ENCODE measurements at regions of chr17 and their contacts with region 1.

Region 1: GRCh38 chr17:40113110-40113906 is 8.5 kb upstream of the MSL1 start:
- DNase-seq: peak; percentile 84 to 97 (median 90)
- ATAC-seq: peak; percentile 85
- H3K4me3 ChIP-seq: peak overlapping the region; percentile 17
- H3K27ac ChIP-seq: peak overlapping the region; percentile 90
- H3K4me1 ChIP-seq: peaks cover 47 to 70% of the 10 kb centered on the region in 2 experiments
- H3K27me3 ChIP-seq: no peaks in the 10 kb centered on the region
- CTCF ChIP-seq: peak; percentile 86 to 94 (median 93)
- EP300 ChIP-seq: peak; percentile 41; the same call in 1 of the 2 replicates
- POLR2A ChIP-seq: peak; percentile 73
- RAD21 ChIP-seq: peak; percentile 82 to 89

Region 2: DNA sequence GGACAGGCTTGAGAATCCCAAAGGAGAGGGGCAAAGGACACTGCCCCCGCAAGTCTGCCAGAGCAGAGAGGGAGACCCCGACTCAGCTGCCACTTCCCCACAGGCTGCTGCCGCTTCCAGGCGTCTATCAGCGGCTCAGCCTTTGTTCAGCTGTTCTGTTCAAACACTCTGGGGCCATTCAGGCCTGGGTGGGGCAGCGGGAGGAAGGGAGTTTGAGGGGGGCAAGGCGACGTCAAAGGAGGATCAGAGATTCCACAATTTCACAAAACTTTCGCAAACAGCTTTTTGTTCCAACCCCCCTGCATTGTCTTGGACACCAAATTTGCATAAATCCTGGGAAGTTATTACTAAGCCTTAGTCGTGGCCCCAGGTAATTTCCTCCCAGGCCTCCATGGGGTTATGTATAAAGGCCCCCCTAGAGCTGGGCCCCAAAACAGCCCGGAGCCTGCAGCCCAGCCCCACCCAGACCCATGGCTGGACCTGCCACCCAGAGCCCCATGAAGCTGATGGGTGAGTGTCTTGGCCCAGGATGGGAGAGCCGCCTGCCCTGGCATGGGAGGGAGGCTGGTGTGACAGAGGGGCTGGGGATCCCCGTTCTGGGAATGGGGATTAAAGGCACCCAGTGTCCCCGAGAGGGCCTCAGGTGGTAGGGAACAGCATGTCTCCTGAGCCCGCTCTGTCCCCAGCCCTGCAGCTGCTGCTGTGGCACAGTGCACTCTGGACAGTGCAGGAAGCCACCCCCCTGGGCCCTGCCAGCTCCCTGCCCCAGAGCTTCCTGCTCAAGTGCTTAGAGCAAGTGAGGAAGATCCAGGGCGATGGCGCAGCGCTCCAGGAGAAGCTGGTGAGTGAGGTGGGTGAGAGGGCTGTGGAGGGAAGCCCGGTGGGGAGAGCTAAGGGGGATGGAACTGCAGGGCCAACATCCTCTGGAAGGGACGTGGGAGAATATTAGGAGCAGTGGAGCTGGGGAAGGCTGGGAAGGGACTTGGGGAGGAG is 98.0 kb before region 1 on chr17 and contains the start of gene CSF3:
- CTCF ChIA-PET with region 1: interaction called, 15 read pairs
- POLR2A ChIA-PET with region 1: interaction called, 4 read pairs
- in situ Hi-C with region 1: no loop called
- intact Hi-C with region 1: loop called (anchors 1 kb)
- DNase-seq: no peak
- ATAC-seq: no peak
- H3K4me3 ChIP-seq: no peak within 1 kb of the TSS
- H3K27ac ChIP-seq: no peak within 1 kb of the TSS
- H3K4me1 ChIP-seq: peaks cover 5 to 64% of the 10 kb centered on the region in 2 experiments; a peak in 3 of 5 replicates
- H3K27me3 ChIP-seq: no peaks in the 10 kb centered on the region
- CTCF ChIP-seq: no peak
- EP300 ChIP-seq: no peak
- POLR2A ChIP-seq: no peak
- RAD21 ChIP-seq: no peak
- polyA plus RNA-seq, gene CSF3: not detected

Region 3: GRCh38 chr17:40064971-40065768 is 48.1 kb before region 1 on chr17:
- CTCF ChIA-PET with region 1: interaction called, 5 read pairs
- POLR2A ChIA-PET with region 1: interaction called, 3 read pairs
- in situ Hi-C with region 1: no loop called
- intact Hi-C with region 1: loop called (anchors 2 kb)
- DNase-seq: no peak
- ATAC-seq: no peak
- H3K4me3 ChIP-seq: no peak overlapping the region; the same call in 1 of the 2 replicates
- H3K27ac ChIP-seq: peak overlapping the region; percentile 18; the same call in 1 of the 3 replicates
- H3K4me1 ChIP-seq: peaks cover 58 to 81% of the 10 kb centered on the region in 2 experiments
- H3K27me3 ChIP-seq: no peaks in the 10 kb centered on the region
- CTCF ChIP-seq: no peak
- EP300 ChIP-seq: no peak
- POLR2A ChIP-seq: no peak
- RAD21 ChIP-seq: no peak

Region 4: DNA sequence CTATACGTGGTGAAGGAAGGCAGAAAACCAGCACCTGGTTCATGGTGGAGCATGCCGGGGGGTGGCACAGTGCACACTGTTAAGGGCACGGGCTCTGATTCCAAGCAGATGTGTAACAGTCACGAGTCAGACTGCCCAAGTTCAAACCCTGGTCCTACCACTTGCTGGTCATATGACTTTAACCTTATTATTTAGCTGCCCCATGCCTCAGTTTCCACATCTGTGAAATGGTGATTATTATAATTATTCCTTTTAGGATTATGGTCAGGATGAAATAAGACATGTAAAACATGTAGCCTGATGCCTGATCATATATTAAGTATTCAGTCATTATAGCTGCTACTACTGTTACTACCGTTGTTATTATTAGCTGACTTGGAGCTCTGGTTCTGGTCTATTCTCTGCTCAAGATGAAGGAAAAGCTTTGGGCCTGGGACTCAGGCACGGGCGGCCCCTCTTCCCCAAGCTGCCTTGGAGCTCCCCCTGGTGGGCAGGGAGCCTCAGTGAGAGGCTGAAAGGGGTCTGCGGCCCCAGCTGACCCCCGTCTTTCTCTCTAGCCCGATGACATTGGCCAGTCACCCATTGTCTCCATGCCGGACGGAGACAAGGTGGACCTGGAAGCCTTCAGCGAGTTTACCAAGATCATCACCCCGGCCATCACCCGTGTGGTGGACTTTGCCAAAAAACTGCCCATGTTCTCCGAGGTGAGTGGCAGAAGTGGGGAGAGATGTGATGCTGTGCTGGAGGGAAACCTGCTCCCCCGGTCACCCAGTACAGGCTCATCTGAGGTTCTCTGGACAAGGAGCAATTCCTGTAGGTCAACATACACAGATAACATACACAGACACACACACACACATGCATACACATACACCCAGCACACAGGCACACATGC is 26.9 kb before region 1 on chr17:
- CTCF ChIA-PET with region 1: no interaction called
- POLR2A ChIA-PET with region 1: no interaction called
- in situ Hi-C with region 1: no loop called
- intact Hi-C with region 1: no loop called
- DNase-seq: peak; percentile 77 to 89 (median 84)
- ATAC-seq: peak; percentile 94
- H3K4me3 ChIP-seq: no peak overlapping the region
- H3K27ac ChIP-seq: no peak overlapping the region; the same call in 2 of the 3 replicates
- H3K4me1 ChIP-seq: peaks cover 0 to 17% of the 10 kb centered on the region in 2 experiments; a peak in 2 of 5 replicates
- H3K27me3 ChIP-seq: no peaks in the 10 kb centered on the region
- CTCF ChIP-seq: peak; percentile 77 to 90 (median 85)
- EP300 ChIP-seq: no peak
- POLR2A ChIP-seq: no peak
- RAD21 ChIP-seq: peak; percentile 72 to 85

Region 5: DNA sequence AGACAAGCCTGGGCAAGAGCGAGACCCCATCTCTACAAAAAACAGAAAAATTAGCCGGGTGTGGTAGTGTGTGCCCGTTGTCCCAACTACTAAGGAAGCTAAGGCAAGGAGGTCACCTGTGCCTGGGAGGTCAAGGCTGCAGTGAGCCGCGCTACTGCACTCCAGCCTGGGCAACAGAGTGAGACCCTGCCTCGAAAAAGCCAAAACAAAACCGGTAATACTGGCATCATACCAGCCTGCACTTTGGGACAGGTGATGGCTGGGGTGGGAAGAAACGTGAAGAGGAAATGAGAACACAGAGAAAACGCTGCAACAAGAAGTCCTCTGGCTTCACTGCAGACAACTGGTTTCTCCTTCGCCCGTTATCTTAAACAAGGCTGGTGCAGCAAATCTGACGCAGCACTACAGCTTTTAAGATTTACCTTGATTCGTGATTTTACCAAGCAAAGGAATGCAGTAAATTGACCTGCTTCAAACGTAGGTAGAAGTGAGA is 26.3 kb after region 1 on chr17:
- CTCF ChIA-PET with region 1: no interaction called
- POLR2A ChIA-PET with region 1: interaction called, 24 read pairs
- in situ Hi-C with region 1: no loop called
- intact Hi-C with region 1: no loop called
- DNase-seq: peak in 1 of 4 experiments; percentile 18
- ATAC-seq: peak; percentile 17
- H3K4me3 ChIP-seq: peak overlapping the region; percentile 97
- H3K27ac ChIP-seq: peak overlapping the region; percentile 99
- H3K4me1 ChIP-seq: peaks cover 9 to 11% of the 10 kb centered on the region in 2 experiments; a peak in 4 of 5 replicates
- H3K27me3 ChIP-seq: no peaks in the 10 kb centered on the region
- CTCF ChIP-seq: no peak
- EP300 ChIP-seq: no peak
- POLR2A ChIP-seq: no peak
- RAD21 ChIP-seq: no peak

Region 6: GRCh38 chr17:40191237-40192208 is 78.2 kb after region 1 on chr17:
- CTCF ChIA-PET with region 1: no interaction called
- POLR2A ChIA-PET with region 1: interaction called, 4 read pairs
- in situ Hi-C with region 1: no loop called
- intact Hi-C with region 1: loop called (anchors 1 kb)
- DNase-seq: peak; percentile 80 to 86 (median 84)
- ATAC-seq: peak; percentile 96
- H3K4me3 ChIP-seq: peak overlapping the region; percentile 46
- H3K27ac ChIP-seq: no peak overlapping the region
- H3K4me1 ChIP-seq: peaks cover 3 to 26% of the 10 kb centered on the region in 2 experiments; a peak in 3 of 5 replicates
- H3K27me3 ChIP-seq: no peaks in the 10 kb centered on the region
- CTCF ChIP-seq: peak; percentile 85 to 88 (median 87)
- EP300 ChIP-seq: 0 out of 2 replicates have a peak, but pooled peaks have one; percentile 16
- POLR2A ChIP-seq: no peak
- RAD21 ChIP-seq: peak; percentile 42 to 74; a peak in 3 of 4 replicates

Region 7: DNA sequence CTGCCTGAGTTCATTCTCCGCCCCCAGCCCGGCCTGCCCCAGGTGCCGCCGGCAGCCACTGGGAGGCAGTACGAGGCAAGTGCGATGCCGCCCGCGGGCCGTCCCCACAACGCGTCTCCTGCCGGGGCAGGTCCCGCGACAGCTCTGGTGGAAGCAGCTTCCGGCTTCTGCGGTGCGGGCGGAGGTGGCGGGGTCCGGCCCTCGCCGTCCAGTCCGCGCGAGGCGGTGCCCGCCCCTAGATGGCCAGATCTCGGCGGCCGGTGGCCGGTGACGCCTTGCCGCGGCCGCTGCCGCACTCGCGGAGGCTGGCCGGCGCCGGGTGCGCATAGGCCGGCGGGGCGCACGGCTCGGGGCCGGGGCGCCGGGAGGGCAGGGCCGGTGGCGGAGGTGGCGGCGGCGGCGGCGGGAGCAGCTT is 249.4 kb after region 1 on chr17:
- CTCF ChIA-PET with region 1: no interaction called
- POLR2A ChIA-PET with region 1: no interaction called
- in situ Hi-C with region 1: no loop called
- intact Hi-C with region 1: loop called (anchors 5 kb)
- DNase-seq: peak; percentile 90 to 91 (median 91)
- ATAC-seq: peak; percentile 94
- H3K4me3 ChIP-seq: peak overlapping the region; percentile 58
- H3K27ac ChIP-seq: peak overlapping the region; percentile 68; the same call in 1 of the 3 replicates
- H3K4me1 ChIP-seq: peaks cover 3 to 51% of the 10 kb centered on the region in 2 experiments; a peak in 3 of 5 replicates
- H3K27me3 ChIP-seq: no peaks in the 10 kb centered on the region
- CTCF ChIP-seq: peak; percentile 88 to 94 (median 89)
- EP300 ChIP-seq: no peak
- POLR2A ChIP-seq: peak; percentile 42; the same call in 1 of the 2 replicates
- RAD21 ChIP-seq: peak; percentile 67 to 93

Region 8: DNA sequence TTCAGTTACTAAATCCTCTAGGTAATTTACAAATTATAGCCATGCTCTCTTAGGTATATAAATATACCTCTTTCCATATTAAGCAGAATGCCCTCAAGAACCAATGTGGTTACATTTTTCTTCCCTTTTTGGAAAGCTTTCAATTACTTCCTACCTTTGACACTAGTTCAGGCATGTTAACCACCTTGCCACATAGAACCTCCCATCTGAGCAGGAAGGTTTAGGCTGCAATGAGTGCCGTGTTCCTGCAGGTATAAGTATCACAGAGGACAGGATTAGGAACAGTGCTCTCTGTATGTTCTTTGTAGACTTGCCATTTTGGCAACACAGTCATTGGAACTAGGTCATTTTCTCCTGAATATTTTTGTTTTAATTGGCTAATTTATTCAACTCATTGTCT is 621.7 kb after region 1 on chr17:
- CTCF ChIA-PET with region 1: no interaction called
- POLR2A ChIA-PET with region 1: no interaction called
- in situ Hi-C with region 1: no loop called
- intact Hi-C with region 1: no loop called
- DNase-seq: no peak
- ATAC-seq: no peak
- H3K4me3 ChIP-seq: no peak overlapping the region
- H3K27ac ChIP-seq: no peak overlapping the region
- H3K4me1 ChIP-seq: no peaks in the 10 kb centered on the region
- H3K27me3 ChIP-seq: peaks cover 0 to 22% of the 10 kb centered on the region in 2 experiments; a peak in 2 of 5 replicates
- CTCF ChIP-seq: no peak
- EP300 ChIP-seq: no peak
- POLR2A ChIP-seq: no peak
- RAD21 ChIP-seq: no peak

Measured in K562 (cell line).